ENCODE measurements at regions of chr16 and their contacts with region 1.

Region 1: DNA sequence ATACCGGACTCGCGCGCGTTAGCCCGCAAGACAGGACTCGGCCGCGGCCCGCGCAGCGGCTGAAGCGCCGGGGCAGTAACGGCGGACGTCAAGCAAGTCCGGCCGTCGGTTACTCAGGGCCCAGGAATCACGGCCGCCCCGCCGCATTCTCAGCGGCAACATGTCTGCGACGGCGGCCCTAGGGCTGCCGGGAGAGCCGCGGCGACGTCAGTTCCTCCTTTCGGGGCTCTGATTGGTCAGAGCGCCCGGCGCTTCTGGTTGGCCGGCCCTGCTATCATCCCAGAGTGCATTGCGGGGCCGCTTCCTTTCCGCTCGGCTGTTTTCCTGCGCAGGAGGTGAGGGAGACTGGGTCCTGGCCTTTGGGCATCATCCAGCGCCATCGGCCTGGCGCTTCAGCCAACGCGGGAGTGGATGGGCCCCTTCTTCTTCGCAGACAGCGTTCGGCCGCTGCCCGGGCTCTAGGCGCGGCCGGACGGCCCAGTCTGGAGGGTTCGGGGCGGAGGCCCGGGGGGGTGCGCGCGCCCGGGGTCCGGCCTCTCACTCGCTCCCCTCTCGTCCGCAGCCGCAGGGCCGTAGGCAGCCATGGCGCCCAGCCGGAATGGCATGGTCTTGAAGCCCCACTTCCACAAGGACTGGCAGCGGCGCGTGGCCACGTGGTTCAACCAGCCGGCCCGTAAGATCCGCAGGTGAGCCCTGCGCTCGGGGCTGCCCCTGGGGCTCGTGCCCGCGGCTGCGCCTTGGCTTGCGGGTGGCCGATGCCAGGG is at the start of gene RPL13:
- DNase-seq: peak; percentile 95
- H3K4me3 ChIP-seq: peak within 1 kb of the TSS; percentile 64 to 81 (median 78)
- H3K27ac ChIP-seq: peak within 1 kb of the TSS; percentile 88
- H3K4me1 ChIP-seq: peaks cover 43% of the 10 kb centered on the region
- H3K27me3 ChIP-seq: no peaks in the 10 kb centered on the region
- CTCF ChIP-seq: no peak
- total RNA-seq, gene RPL13: 1,876 to 2,450 TPM

Region 2: GRCh38 chr16:89484923-89485679 is 75.5 kb before region 1 on chr16:
- CTCF ChIA-PET with region 1: no interaction called
- dilution Hi-C with region 1: no loop called
- in situ Hi-C with region 1: no loop called
- intact Hi-C with region 1: no loop called
- DNase-seq: no peak
- H3K4me3 ChIP-seq: no peak overlapping the region
- H3K27ac ChIP-seq: no peak overlapping the region
- H3K4me1 ChIP-seq: peaks cover 38% of the 10 kb centered on the region
- H3K27me3 ChIP-seq: no peaks in the 10 kb centered on the region
- CTCF ChIP-seq: no peak

Region 3: GRCh38 chr16:89593841-89594240 is 33.3 kb after region 1 on chr16:
- CTCF ChIA-PET with region 1: no interaction called
- dilution Hi-C with region 1: no loop called
- in situ Hi-C with region 1: no loop called
- intact Hi-C with region 1: no loop called
- DNase-seq: no peak
- H3K4me3 ChIP-seq: no peak overlapping the region
- H3K27ac ChIP-seq: no peak overlapping the region
- H3K4me1 ChIP-seq: no peaks in the 10 kb centered on the region
- H3K27me3 ChIP-seq: no peaks in the 10 kb centered on the region
- CTCF ChIP-seq: no peak

Region 4: DNA sequence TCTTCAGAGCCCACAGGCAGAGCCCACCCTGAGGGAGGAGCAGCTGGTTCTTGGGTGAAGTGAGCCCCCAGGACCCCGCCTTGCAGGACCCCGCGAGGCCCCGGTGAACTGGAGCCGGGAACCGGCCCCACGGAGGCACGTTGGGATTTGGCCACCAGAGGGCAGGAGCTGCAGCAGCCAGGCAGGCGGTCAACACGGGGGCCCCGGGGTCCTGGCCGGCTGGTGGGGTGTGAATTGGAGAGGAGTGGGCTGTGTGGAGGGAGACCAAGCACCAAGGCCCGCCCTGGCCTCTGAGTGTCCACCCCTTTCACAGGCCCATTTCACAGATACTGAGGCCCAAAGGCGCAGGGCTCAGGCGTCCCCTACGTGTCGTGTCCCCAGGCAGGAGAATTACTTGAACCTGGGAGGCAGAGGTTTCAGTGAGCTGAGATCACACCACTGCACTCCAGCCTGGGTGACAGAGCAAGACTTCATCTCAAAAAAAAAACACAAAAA is 55.1 kb after region 1 on chr16:
- CTCF ChIA-PET with region 1: no interaction called
- dilution Hi-C with region 1: loop called (anchors 5 kb)
- in situ Hi-C with region 1: no loop called
- intact Hi-C with region 1: no loop called
- DNase-seq: no peak
- H3K4me3 ChIP-seq: no peak overlapping the region
- H3K27ac ChIP-seq: no peak overlapping the region
- H3K4me1 ChIP-seq: no peaks in the 10 kb centered on the region
- H3K27me3 ChIP-seq: no peaks in the 10 kb centered on the region
- CTCF ChIP-seq: peak; percentile 44 to 79

Measured in mammary epithelial cell (primary cell).